Breast epithelium (tissue), 4 donors: ENCODE measurements at regions of chr12 and their contacts with region 1.

Region 1: GRCh38 chr12:3218228-3219171 is 141.3 kb downstream of the TSPAN9 start:
- DNase-seq: peak; percentile 61 to 73
- H3K4me3 ChIP-seq: peak overlapping the region in 1 of 3 donors; percentile 34
- H3K27ac ChIP-seq: peak overlapping the region; percentile 56 to 89
- H3K4me1 ChIP-seq: peaks cover 4 to 9% of the 10 kb centered on the region in 2 donors
- H3K27me3 ChIP-seq: no peaks in the 10 kb centered on the region
- CTCF ChIP-seq: no peak
- POLR2A ChIP-seq: no peak

Region 2: GRCh38 chr12:3135522-3136461 is 82.7 kb before region 1 on chr12:
- intact Hi-C with region 1: no loop called
- DNase-seq: peak in 1 of 2 donors; percentile 31
- H3K4me3 ChIP-seq: no peak overlapping the region
- H3K27ac ChIP-seq: no peak overlapping the region
- H3K4me1 ChIP-seq: peaks cover 0 to 12% of the 10 kb centered on the region in 2 donors
- H3K27me3 ChIP-seq: no peaks in the 10 kb centered on the region
- CTCF ChIP-seq: peak; percentile 48 to 82 (median 80)
- POLR2A ChIP-seq: no peak

Region 3: DNA sequence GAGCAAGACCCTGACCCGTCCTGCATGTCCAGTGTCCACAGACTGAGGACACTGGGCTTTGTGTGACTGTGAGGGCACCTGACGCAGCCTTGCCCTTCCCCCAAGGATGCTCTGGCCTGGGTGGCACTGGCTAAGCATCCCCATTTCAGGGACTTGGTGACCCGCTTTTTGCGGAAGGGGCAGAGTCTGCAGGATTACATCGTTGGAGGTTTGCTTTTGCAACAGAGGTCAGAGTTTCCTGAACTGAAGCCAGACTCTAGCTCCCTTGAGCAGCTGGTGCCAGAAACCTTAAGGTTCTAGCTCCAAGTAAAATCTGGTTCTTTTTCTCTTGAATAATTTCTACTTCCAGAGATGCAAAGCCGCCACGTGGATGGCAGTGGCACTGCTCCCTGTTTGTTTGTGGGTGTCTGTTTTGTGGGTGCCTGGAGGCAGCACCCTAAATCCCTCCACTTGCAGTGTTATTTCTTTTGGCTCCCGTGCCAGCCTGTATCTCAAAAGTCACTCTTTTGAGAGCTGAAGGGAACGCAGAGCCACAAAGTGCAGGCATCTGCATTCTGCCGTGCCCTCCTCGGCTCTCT is 43.4 kb after region 1 on chr12:
- intact Hi-C with region 1: loop called (anchors 10 kb)
- DNase-seq: no peak
- H3K4me3 ChIP-seq: no peak overlapping the region
- H3K27ac ChIP-seq: no peak overlapping the region
- H3K4me1 ChIP-seq: no peaks in the 10 kb centered on the region
- H3K27me3 ChIP-seq: no peaks in the 10 kb centered on the region
- CTCF ChIP-seq: no peak
- POLR2A ChIP-seq: no peak